Activated CD8-positive, alpha-beta T cell treated with anti-CD3 and anti-CD28 coated beads, Interleukin-2, amount 10 ng/mL, durations not matched to agents 7 days and 5 days (primary cell): ENCODE measurements at regions of chr12 and their contacts with region 1.

Region 1: GRCh38 chr12:9707864-9708808 is 24.8 kb downstream of the CLECL1 start:
- DNase-seq: peak; percentile 81
- ATAC-seq: peak; percentile 84
- H3K4me3 Mint-ChIP-seq: peak overlapping the region; percentile 55
- H3K27ac Mint-ChIP-seq: peak overlapping the region; percentile 85
- H3K4me1 Mint-ChIP-seq: peaks cover 48% of the 10 kb centered on the region
- H3K27me3 Mint-ChIP-seq: no peaks in the 10 kb centered on the region

Region 2: GRCh38 chr12:9687228-9687627 is 20.9 kb before region 1 on chr12:
- CTCF ChIA-PET with region 1: interaction called, 12 read pairs
- POLR2A ChIA-PET with region 1: interaction called, 3 read pairs
- DNase-seq: no peak
- ATAC-seq: no peak
- H3K4me3 Mint-ChIP-seq: no peak overlapping the region
- H3K27ac Mint-ChIP-seq: peak overlapping the region; percentile 46
- H3K4me1 Mint-ChIP-seq: peaks cover 75% of the 10 kb centered on the region
- H3K27me3 Mint-ChIP-seq: no peaks in the 10 kb centered on the region

Region 3: DNA sequence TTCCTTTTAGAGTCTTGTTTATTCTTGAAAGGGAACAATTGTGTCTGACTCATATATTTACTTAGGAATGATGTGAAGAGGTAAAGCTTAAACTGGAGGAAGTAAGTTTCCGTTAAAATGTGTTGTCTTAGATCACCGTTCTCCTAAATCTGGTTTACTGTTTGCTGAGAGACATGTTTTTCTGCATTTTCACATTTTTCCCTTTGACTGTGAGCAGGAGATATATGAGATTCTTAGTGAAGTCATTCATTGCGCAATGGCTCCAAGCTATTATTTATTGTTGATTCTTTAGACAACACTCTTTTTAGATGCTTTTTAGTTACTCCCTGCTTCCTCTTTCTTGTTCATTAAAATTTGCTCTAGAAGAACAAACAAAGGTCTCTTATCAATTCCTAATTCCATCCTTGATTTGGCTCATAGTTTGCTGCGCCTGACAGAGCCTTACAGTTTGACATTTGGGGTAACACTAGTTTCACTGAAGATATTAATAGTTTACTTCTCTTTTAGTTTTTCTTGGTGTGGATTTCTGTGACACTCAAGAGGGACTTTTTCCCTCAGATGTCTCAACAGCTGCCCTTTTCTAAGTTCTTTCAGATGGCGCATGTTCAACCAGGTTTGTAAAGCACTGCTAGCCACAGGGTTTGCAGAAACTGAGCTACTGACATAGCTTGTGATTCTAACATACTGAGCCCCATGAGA is 13.4 kb after region 1 on chr12:
- CTCF ChIA-PET with region 1: interaction called, 28 read pairs
- POLR2A ChIA-PET with region 1: interaction called, 5 read pairs
- DNase-seq: no peak
- ATAC-seq: no peak
- H3K4me3 Mint-ChIP-seq: no peak overlapping the region
- H3K27ac Mint-ChIP-seq: no peak overlapping the region
- H3K4me1 Mint-ChIP-seq: peaks cover 26% of the 10 kb centered on the region
- H3K27me3 Mint-ChIP-seq: no peaks in the 10 kb centered on the region

Region 4: DNA sequence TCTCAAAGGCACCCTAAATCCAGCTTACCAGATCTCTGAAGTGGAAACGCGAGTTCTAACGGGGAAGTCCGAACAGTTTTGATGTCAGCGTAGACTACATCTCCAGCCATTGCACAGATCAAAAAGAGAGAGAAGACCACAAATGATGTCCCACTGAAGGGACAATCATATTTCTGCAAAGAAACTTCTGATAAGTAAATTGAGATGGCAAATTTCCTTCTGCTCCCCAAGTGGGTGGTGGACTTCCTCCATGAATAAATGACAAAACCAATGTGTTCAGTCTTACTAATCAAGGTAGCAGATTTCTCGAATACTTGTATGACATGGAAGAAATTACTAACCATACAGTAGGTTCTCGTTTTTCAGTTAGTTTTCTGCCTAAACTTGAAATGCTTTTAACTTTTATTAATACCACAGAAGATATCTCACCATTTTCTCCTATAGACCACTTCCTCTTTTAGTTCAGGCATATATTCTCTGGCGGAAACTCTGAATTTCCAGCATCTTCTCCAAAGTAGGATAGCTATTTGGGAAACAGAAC is 24.9 kb after region 1 on chr12 and contains the start of gene CLECL1:
- CTCF ChIA-PET with region 1: interaction called, 43 read pairs
- POLR2A ChIA-PET with region 1: interaction called, 5 read pairs
- DNase-seq: no peak
- ATAC-seq: peak; percentile 10
- H3K4me3 Mint-ChIP-seq: peak within 1 kb of the TSS; percentile 76
- H3K27ac Mint-ChIP-seq: peak within 1 kb of the TSS; percentile 78
- H3K4me1 Mint-ChIP-seq: peaks cover 57% of the 10 kb centered on the region
- H3K27me3 Mint-ChIP-seq: no peaks in the 10 kb centered on the region
- total RNA-seq, gene CLECL1: 1.3 to 1.6 TPM

Region 5: DNA sequence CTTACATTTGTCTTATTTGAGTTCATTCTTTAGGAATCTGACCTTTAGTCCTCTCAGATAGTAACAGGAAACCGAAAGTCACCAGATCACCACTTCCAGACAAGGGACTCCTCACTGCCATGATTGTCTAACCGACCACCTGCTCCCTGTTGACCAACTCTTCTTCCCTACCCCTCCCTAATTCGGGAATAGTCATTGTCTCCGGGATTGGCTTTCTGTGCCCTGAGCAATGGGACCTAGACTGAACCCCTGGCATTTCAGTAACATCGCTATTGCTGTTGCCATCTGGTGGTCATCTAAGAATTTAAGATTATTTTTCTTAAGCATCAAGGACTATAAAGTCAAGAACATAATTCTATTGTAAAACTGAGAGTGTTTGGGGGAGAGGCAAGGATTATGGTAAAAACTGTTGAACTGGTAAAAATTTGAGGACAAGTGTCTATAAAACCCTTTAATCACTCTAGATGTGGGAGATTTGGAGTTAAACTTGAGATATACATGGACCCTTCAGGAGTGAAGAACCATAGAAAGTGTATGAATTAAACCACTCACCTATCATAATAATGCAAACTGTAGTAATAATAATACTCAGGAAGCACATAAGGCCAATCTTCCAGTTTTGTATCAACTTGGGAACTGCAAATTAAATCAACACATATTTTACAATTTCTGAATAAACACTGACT is 217.7 kb after region 1 on chr12:
- CTCF ChIA-PET with region 1: no interaction called
- POLR2A ChIA-PET with region 1: no interaction called
- DNase-seq: peak; percentile 33
- ATAC-seq: peak; percentile 69
- H3K4me3 Mint-ChIP-seq: peak overlapping the region; percentile 60
- H3K27ac Mint-ChIP-seq: peak overlapping the region; percentile 77
- H3K4me1 Mint-ChIP-seq: peaks cover 37% of the 10 kb centered on the region
- H3K27me3 Mint-ChIP-seq: peaks cover 7% of the 10 kb centered on the region